ENCODE measurements at regions of chr2 and their contacts with region 1.

Region 1: GRCh38 chr2:25184261-25184695 is 15.9 kb upstream of the POMC start:
- DNase-seq: no peak
- H3K4me3 ChIP-seq: no peak overlapping the region
- H3K27ac ChIP-seq: no peak overlapping the region
- H3K27me3 ChIP-seq: peaks cover 25% of the 10 kb centered on the region
- CTCF ChIP-seq: no peak

Region 2: DNA sequence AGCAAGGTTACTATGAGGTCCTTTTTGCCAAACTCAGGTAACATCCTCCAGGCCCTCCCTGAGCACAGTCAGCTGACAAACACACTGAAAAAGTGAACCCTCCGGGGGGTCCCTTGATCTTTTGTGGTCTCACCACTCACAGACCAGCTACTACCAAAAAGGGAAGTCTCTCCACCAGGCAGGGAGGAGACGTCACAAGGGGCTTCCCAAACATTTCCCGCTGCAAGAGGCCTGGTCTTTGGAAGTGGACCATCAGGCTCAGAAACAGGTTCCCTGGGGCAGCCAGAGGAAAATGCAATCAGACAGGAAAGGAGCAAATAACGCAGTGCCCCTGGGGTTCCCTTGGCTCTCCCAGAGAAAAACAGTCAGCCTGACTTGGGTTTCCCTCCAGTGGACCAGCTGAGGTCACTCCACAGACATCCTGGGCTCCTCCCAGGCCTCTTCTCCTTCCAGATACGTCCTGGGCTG is 22.8 kb after region 1 on chr2:
- CTCF ChIA-PET with region 1: no interaction called
- POLR2A ChIA-PET with region 1: no interaction called
- DNase-seq: no peak
- H3K4me3 ChIP-seq: no peak overlapping the region
- H3K27ac ChIP-seq: no peak overlapping the region
- H3K27me3 ChIP-seq: no peaks in the 10 kb centered on the region
- CTCF ChIP-seq: no peak

Region 3: DNA sequence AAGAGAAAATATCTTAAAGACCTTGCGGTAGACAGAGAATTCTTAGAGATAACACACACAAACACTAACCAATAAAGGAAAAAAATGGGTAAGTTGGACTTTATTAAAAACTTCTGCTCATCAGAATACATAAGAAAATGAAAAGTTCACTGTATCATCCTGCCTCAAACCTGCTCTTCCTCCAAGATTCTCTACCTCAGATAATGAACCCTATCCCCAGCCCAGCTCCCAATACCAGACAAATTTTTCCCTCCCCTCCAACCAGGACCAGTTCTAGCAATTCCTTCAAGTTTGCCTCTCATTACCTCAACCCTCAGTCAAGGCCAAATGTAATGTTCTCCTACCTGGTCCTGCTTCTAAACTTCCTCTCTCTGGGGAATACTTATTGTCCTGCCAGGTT is 78.0 kb after region 1 on chr2:
- CTCF ChIA-PET with region 1: no interaction called
- POLR2A ChIA-PET with region 1: interaction called, 10 read pairs
- DNase-seq: no peak
- H3K4me3 ChIP-seq: no peak overlapping the region
- H3K27ac ChIP-seq: no peak overlapping the region
- H3K27me3 ChIP-seq: no peaks in the 10 kb centered on the region
- CTCF ChIP-seq: no peak